ENCODE measurements at regions of chr4 and their contacts with region 1.

Region 1: GRCh38 chr4:12852338-12853307 is 631.5 kb downstream of the RAB28 start:
- DNase-seq: no peak
- H3K4me3 Mint-ChIP-seq: no peak overlapping the region
- H3K27ac Mint-ChIP-seq: no peak overlapping the region
- H3K4me1 Mint-ChIP-seq: no peaks in the 10 kb centered on the region
- H3K27me3 Mint-ChIP-seq: peaks cover 10% of the 10 kb centered on the region

Region 2: DNA sequence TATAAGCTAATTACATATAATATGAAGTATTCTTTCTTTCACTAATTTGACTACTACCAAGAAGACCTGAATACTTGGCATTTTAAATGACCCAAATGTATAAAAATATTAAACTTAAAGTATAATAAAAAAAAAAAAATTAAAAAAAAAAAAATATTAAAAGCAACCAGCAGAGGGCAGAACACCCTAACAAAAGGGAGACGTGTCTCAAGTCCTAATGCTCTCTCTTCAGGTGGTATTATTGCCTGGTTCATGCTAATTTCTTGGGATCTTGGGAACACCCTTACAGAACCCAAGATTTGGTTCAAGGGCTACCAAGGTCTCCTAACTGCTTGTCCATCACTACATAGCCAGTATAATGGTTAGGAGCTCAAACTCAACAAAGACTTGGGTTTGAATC is 123.2 kb before region 1 on chr4:
- CTCF ChIA-PET with region 1: interaction called, 3 read pairs
- intact Hi-C with region 1: loop called (anchors 5 kb)
- DNase-seq: no peak
- H3K4me3 Mint-ChIP-seq: no peak overlapping the region
- H3K27ac Mint-ChIP-seq: no peak overlapping the region
- H3K4me1 Mint-ChIP-seq: no peaks in the 10 kb centered on the region
- H3K27me3 Mint-ChIP-seq: peaks cover 23% of the 10 kb centered on the region

Region 3: DNA sequence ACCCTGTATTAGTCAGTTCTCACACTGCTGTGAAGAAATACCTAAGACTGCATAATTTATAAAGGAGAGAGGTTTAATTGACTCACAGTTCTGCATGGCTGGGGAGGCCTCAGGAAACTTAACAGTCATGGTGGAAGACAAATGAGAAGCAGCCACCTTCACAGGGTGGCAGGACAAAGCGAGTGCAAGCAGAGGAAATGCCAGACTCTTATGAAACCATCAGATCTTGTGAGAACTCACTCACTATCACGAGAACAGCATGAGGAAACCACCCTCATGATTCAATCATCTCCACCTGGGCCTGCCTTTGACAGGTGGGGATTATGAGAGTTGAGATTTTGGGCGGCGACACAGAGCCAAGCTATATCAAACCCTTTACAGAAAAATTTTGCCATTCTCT is 90.9 kb before region 1 on chr4:
- CTCF ChIA-PET with region 1: no interaction called
- intact Hi-C with region 1: no loop called
- DNase-seq: no peak
- H3K4me3 Mint-ChIP-seq: no peak overlapping the region
- H3K27ac Mint-ChIP-seq: no peak overlapping the region
- H3K4me1 Mint-ChIP-seq: no peaks in the 10 kb centered on the region
- H3K27me3 Mint-ChIP-seq: peaks cover 3% of the 10 kb centered on the region

Region 4: DNA sequence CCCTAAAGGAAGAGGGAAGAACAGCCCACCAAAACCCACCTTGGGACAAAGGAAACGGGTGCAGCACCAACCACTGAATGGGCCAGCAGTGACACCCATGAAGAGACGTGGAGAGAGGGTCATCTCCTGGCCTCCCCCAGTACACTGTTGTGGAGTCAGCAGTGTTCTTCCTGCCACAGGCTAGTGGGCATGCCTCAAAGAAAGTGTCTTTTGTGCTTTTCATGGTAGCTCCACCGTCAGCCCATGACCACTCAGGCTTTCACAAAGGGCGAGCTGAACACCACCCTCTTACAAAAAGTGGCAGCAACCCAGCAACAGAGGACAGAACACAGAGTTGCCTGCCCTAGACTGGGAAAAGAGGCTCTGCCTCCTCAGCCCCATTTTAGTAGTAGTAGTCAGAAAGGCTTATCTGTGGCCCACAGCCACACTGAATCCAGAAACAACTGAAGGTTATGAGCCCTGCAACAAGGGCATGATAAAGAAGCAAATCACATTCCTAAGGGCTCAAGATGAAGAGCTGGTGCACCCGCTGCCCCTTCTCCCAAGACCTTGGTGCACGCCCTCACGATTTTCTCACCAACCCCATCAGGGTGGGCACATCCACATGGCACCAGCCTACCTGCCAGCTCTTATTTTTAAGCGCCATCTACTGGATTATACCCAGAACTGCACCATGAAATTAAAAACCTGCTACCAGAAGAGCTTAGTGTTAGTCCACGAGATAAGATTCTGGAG is 578.4 kb after region 1 on chr4:
- CTCF ChIA-PET with region 1: no interaction called
- intact Hi-C with region 1: loop called (anchors 1 kb)
- DNase-seq: no peak
- H3K4me3 Mint-ChIP-seq: no peak overlapping the region
- H3K27ac Mint-ChIP-seq: no peak overlapping the region
- H3K4me1 Mint-ChIP-seq: peaks cover 23% of the 10 kb centered on the region
- H3K27me3 Mint-ChIP-seq: no peaks in the 10 kb centered on the region